Caco-2 (cell line): ENCODE measurements at regions of chr5 and their contacts with region 1.

Region 1: GRCh38 chr5:134289509-134290113 is 63.7 kb upstream of the PPP2CA start:
- DNase-seq: peak; percentile 72 to 79
- H3K4me3 ChIP-seq: no peak overlapping the region
- H3K4me3 Mint-ChIP-seq: no peak overlapping the region
- H3K27ac Mint-ChIP-seq: no peak overlapping the region
- H3K4me1 ChIP-seq: no peaks in the 10 kb centered on the region
- H3K4me1 Mint-ChIP-seq: peaks cover 11% of the 10 kb centered on the region
- H3K27me3 ChIP-seq: no peaks in the 10 kb centered on the region
- H3K27me3 Mint-ChIP-seq: no peaks in the 10 kb centered on the region
- CTCF ChIP-seq: peak; percentile 69 to 86

Region 2: GRCh38 chr5:134184155-134185135 is 105.2 kb before region 1 on chr5:
- CTCF ChIA-PET with region 1: interaction called, 18 read pairs
- POLR2A ChIA-PET with region 1: no interaction called
- intact Hi-C with region 1: loop called (anchors 1 kb)
- DNase-seq: peak; percentile 80 to 83
- H3K4me3 ChIP-seq: no peak overlapping the region
- H3K4me3 Mint-ChIP-seq: no peak overlapping the region
- H3K27ac Mint-ChIP-seq: no peak overlapping the region
- H3K4me1 ChIP-seq: peaks cover 8% of the 10 kb centered on the region; the same call in 1 of the 2 replicates
- H3K4me1 Mint-ChIP-seq: no peaks in the 10 kb centered on the region
- H3K27me3 ChIP-seq: no peaks in the 10 kb centered on the region
- H3K27me3 Mint-ChIP-seq: no peaks in the 10 kb centered on the region
- CTCF ChIP-seq: peak; percentile 90 to 94

Region 3: DNA sequence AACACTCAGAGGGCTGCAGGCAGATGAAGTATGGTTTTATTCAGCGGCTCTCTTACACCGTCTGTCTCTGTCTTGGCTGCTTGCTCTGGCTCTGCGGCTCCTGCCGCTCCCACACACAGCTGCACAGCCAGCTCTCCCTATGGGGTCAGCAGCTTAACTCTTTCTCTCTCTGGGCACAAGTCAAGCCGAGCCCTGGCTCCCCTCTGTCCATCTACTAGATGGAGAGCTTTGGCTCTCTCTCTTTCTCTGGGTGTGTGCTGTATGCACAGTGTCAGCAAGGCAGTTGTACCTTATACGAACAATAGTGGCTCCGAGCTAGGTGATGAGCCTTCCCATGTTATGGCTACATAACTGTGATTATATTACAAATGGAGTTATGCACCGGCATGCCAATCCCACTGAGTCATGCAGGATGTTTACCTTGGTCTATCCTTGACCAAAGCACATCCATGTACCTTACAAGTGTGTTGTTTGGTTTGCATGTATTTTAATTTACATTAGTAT is 44.5 kb before region 1 on chr5:
- CTCF ChIA-PET with region 1: interaction called, 3 read pairs
- POLR2A ChIA-PET with region 1: no interaction called
- intact Hi-C with region 1: loop called (anchors 2 kb)
- DNase-seq: peak; percentile 50 to 63
- H3K4me3 ChIP-seq: no peak overlapping the region
- H3K4me3 Mint-ChIP-seq: no peak overlapping the region
- H3K27ac Mint-ChIP-seq: peak overlapping the region; percentile 18
- H3K4me1 ChIP-seq: peaks cover 37% of the 10 kb centered on the region
- H3K4me1 Mint-ChIP-seq: peaks cover 26% of the 10 kb centered on the region
- H3K27me3 ChIP-seq: no peaks in the 10 kb centered on the region
- H3K27me3 Mint-ChIP-seq: no peaks in the 10 kb centered on the region
- CTCF ChIP-seq: no peak